ENCODE measurements at regions of chr6 and their contacts with region 1.

Region 1: GRCh38 chr6:34610819-34611477 is 54.8 kb upstream of the SPDEF start:
- H3K4me3 ChIP-seq: no peak overlapping the region
- H3K27ac ChIP-seq: no peak overlapping the region
- H3K4me1 ChIP-seq: peaks cover 7% of the 10 kb centered on the region
- CTCF ChIP-seq: no peak

Region 2: GRCh38 chr6:34196126-34196830 is 414.7 kb before region 1 on chr6:
- CTCF ChIA-PET with region 1: interaction called, 15 read pairs
- POLR2A ChIA-PET with region 1: no interaction called
- H3K4me3 ChIP-seq: peak overlapping the region; percentile 30
- H3K27ac ChIP-seq: no peak overlapping the region
- H3K4me1 ChIP-seq: no peaks in the 10 kb centered on the region
- CTCF ChIP-seq: peak; percentile 97

Region 3: GRCh38 chr6:34414999-34415858 is 195.7 kb before region 1 on chr6:
- CTCF ChIA-PET with region 1: interaction called, 14 read pairs
- POLR2A ChIA-PET with region 1: no interaction called
- H3K4me3 ChIP-seq: no peak overlapping the region
- H3K27ac ChIP-seq: no peak overlapping the region
- H3K4me1 ChIP-seq: no peaks in the 10 kb centered on the region
- CTCF ChIP-seq: peak; percentile 44

Region 4: GRCh38 chr6:34521463-34522285 is 89.3 kb before region 1 on chr6:
- CTCF ChIA-PET with region 1: interaction called, 46 read pairs
- POLR2A ChIA-PET with region 1: interaction called, 3 read pairs
- H3K4me3 ChIP-seq: no peak overlapping the region
- H3K27ac ChIP-seq: no peak overlapping the region
- H3K4me1 ChIP-seq: no peaks in the 10 kb centered on the region
- CTCF ChIP-seq: no peak

Region 5: DNA sequence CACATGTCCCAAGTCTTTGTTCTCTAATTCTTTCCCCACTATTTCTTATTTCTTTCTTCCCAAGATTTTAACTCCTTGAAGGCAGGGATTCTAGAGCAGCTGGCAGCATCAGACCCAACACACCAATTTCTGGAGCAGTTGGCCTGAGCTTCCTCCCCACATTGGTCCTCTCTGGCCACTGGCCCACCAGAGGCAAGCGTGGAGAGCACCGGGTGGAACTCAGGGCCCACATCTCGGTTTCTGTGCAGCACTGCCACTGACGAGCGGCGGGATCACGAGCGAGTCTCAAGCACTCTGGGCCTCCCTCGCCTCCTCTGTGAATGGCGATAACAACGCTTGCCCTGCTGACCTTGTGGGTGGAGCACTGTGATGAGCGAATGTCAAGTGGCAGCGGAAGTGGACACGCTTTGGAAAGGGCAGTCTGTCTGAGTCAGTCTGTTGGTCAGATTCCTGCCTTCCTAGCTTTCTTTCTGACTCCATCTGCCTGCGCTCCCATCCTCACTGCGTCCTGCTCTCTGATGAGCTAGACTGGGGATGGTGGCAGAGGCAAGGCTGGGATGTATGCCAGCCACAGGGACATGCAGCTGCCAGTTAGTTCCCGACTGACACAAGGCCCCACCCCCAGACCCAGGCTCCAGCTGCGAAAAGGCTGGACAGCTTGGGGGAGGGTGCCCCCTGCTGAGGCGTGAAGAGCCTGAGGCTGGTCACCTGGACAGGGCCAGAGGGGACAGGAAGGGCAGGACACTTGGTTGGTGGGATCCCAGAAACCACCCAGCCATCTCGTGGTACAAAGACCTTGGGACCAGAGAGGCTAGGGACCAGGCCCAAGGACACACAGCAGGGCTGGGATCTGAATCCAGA is 50.4 kb before region 1 on chr6:
- CTCF ChIA-PET with region 1: interaction called, 16 read pairs
- POLR2A ChIA-PET with region 1: no interaction called
- H3K4me3 ChIP-seq: no peak overlapping the region
- H3K27ac ChIP-seq: no peak overlapping the region
- H3K4me1 ChIP-seq: no peaks in the 10 kb centered on the region
- CTCF ChIP-seq: 0 out of 2 replicates have a peak, but pooled peaks have one; percentile 7

Region 6: DNA sequence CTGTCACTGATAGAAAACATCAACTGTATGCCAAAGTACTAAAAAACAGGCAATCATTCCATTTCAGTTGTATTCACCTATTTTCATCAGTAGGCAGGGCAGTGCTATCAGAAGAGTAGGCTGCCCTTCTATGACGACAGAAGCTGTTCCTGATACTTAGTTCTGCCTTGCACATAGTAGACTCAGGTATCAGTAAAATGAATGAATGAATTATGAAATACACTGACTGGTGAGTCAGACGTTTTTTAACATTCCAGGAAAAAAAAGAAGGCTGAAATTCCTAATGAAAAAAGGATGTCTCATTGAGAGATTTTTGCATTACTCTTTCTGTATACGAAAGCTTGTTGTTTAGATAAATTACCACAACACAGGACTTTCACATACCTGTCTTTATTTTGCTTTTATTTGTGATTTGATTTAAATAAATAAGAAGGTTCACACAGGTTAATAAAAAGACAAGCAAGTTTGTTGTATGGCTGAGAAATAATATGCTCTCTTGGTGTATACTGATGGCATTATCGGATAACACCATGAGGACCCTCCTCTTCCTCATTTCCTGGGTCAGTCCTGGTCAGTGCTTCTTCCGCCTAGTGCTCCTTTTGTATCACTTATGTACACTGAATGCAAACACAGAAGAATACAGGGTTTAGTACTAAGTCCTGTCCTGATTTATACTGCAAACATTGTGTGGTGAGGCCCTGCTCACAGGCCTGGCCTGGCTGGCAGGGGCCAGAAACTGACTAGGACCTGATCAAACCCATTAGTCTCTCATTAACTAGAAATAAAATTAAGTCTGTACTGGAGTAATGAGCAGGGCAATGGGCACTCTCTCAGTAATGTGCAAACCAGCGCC is 15.4 kb before region 1 on chr6:
- CTCF ChIA-PET with region 1: interaction called, 61 read pairs
- POLR2A ChIA-PET with region 1: no interaction called
- H3K4me3 ChIP-seq: no peak overlapping the region
- H3K27ac ChIP-seq: no peak overlapping the region
- H3K4me1 ChIP-seq: no peaks in the 10 kb centered on the region
- CTCF ChIP-seq: no peak